ENCODE measurements at regions of chr11 and their contacts with region 1.

Region 1: DNA sequence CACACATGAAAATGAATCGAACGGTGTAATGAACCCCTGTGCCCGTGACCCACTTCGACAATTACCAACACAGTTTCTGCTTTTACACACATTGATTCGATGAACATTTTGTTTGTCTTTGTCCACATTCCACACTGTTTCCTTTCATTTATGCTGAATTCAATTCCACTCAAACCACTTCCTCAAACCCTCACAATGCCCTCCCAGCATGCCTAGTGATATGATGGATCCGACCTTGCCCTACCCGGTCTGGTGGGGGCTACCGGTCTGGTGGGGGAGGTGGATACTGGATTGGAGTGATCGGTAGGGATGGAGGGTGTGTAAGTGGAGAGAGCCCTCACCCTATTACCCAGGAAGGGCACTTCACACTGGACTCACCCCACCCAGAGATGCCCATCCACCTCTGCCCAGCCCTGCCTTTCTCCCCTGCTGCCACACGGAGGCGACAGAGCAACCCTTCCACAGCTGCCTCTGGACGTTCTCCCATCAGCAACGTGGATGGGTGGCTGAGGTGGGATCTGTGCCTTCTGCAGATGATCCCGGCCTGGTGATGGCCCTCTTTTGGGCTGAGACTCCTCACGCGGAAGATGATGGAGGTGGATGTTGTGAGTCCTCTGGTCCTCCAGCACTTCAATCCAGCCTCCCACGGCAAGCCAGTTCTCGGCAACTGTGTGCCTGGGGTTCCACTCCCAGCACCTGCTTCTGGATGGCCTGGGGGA is 33.0 kb upstream of the P2RY2 start:
- DNase-seq: peak in 1 of 2 experiments; percentile 84
- H3K4me3 ChIP-seq: no peak overlapping the region
- H3K27ac ChIP-seq: no peak overlapping the region
- H3K4me1 ChIP-seq: no peaks in the 10 kb centered on the region
- H3K27me3 ChIP-seq: no peaks in the 10 kb centered on the region
- CTCF ChIP-seq: peak; percentile 96 to 100 (median 96)
- EP300 ChIP-seq: no peak
- POLR2A ChIP-seq: no peak
- RAD21 ChIP-seq: peak; percentile 84 to 91

Region 2: DNA sequence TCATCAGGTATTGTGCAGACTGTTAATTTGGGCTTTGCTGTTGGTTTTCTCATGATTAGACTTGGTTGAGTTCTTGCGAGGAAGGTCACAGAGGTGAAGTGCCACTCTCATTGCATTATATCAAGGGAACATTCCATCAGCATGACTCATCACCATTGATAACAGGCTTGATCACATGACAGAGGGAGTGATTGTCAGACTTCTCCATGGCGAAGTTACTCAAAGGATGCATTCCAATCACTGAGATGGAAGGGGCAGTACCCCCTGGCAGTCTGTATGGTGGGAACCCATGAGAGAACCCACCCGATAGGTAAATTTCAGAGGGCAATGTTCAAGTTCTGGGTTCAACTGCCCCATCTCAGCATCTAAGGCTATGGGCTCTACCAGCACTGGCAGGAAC is 13.6 kb after region 1 on chr11:
- CTCF ChIA-PET with region 1: interaction called, 44 read pairs
- POLR2A ChIA-PET with region 1: no interaction called
- DNase-seq: no peak
- H3K4me3 ChIP-seq: no peak overlapping the region
- H3K27ac ChIP-seq: no peak overlapping the region
- H3K4me1 ChIP-seq: peaks cover 7 to 20% (median 15%) of the 10 kb centered on the region in 4 experiments
- H3K27me3 ChIP-seq: no peaks in the 10 kb centered on the region
- CTCF ChIP-seq: no peak
- EP300 ChIP-seq: no peak
- POLR2A ChIP-seq: no peak
- RAD21 ChIP-seq: no peak

Region 3: DNA sequence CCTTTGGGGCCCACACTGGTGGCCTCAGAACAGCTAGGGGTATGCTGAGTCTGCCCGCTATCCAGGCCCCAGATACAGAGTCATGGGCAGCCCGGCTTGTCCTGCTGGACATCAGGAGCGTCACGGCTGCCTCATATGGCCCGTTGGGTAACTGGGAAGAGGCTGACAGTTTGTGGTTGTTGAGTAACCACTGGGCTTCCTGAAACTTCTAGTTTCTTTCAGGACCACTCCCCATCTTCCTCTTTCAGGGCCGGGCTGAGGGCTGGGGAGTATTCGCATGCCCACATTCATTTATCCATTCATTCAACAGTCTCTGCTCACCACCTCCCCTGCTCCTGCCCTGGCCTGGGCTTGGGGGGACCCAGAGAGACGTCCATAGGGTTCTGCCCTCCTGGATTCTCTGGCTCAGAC is 19.6 kb after region 1 on chr11:
- CTCF ChIA-PET with region 1: interaction called, 15 read pairs
- POLR2A ChIA-PET with region 1: no interaction called
- DNase-seq: no peak
- H3K4me3 ChIP-seq: no peak overlapping the region
- H3K27ac ChIP-seq: no peak overlapping the region
- H3K4me1 ChIP-seq: peaks cover 7 to 16% (median 10%) of the 10 kb centered on the region in 4 experiments; a peak in 6 of 7 replicates
- H3K27me3 ChIP-seq: no peaks in the 10 kb centered on the region
- CTCF ChIP-seq: no peak
- EP300 ChIP-seq: no peak
- POLR2A ChIP-seq: no peak
- RAD21 ChIP-seq: no peak

Region 4: GRCh38 chr11:73218106-73218829 is 33.2 kb after region 1 on chr11 and contains the start of gene P2RY2:
- CTCF ChIA-PET with region 1: interaction called, 22 read pairs
- POLR2A ChIA-PET with region 1: interaction called, 3 read pairs
- DNase-seq: peak; percentile 15 to 91
- H3K4me3 ChIP-seq: peak within 1 kb of the TSS; percentile 58 to 69 (median 64)
- H3K27ac ChIP-seq: no peak within 1 kb of the TSS
- H3K4me1 ChIP-seq: peaks cover 0 to 5% (median 2%) of the 10 kb centered on the region in 4 experiments; a peak in 5 of 7 replicates
- H3K27me3 ChIP-seq: peaks cover 2 to 35% (median 31%) of the 10 kb centered on the region in 4 experiments
- CTCF ChIP-seq: peak; percentile 47 to 70 (median 64)
- EP300 ChIP-seq: no peak
- POLR2A ChIP-seq: no peak
- RAD21 ChIP-seq: peak; percentile 22 to 27; a peak in 2 of 4 replicates
- total RNA-seq, gene P2RY2: 1.0 and 1.2 TPM in 2 replicates

Region 5: GRCh38 chr11:73242251-73243079 is 57.4 kb after region 1 on chr11:
- CTCF ChIA-PET with region 1: interaction called, 451 read pairs
- POLR2A ChIA-PET with region 1: no interaction called
- DNase-seq: peak in 1 of 2 experiments; percentile 97
- H3K4me3 ChIP-seq: peak overlapping the region; percentile 14 to 58 (median 22); a peak in 5 of 8 replicates
- H3K27ac ChIP-seq: peak overlapping the region; percentile 13; the same call in 1 of the 2 replicates
- H3K4me1 ChIP-seq: peaks cover 0 to 8% (median 3%) of the 10 kb centered on the region in 4 experiments; a peak in 3 of 7 replicates
- H3K27me3 ChIP-seq: no peaks in the 10 kb centered on the region
- CTCF ChIP-seq: peak; percentile 92 to 96 (median 93)
- EP300 ChIP-seq: no peak
- POLR2A ChIP-seq: peak in 1 of 2 experiments; percentile 75; a peak in 1 of 3 replicates
- RAD21 ChIP-seq: peak; percentile 80 to 85

Region 6: DNA sequence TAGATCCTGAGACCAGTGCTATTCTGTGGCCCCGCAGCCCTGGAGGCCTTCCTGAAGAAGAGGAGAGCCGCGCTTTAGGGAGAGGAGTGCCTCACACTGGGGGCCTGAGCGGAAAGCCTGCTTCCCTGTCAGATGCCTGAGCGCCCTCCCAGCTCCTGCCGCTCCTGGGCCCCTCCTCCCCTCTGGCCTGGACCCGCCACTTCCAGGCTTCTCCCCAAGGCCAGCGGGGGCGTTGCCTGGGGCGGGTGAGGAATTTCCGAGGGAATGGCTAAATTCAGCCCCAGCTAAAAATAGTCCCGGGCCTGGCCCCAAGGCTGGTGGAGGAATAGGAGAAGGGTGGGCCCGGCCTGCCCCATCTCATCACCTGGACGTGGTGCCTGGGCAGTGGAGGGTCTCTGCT is 138.4 kb after region 1 on chr11:
- CTCF ChIA-PET with region 1: no interaction called
- POLR2A ChIA-PET with region 1: no interaction called
- DNase-seq: peak in 1 of 2 experiments; percentile 80
- H3K4me3 ChIP-seq: peak overlapping the region in 1 of 4 experiments; percentile 3; a peak in 3 of 8 replicates
- H3K27ac ChIP-seq: no peak overlapping the region; the same call in 1 of the 2 replicates
- H3K4me1 ChIP-seq: peaks cover 15 to 28% (median 20%) of the 10 kb centered on the region in 4 experiments
- H3K27me3 ChIP-seq: peaks cover 0 to 12% (median 4%) of the 10 kb centered on the region in 4 experiments; a peak in 3 of 7 replicates
- CTCF ChIP-seq: no peak
- EP300 ChIP-seq: no peak
- POLR2A ChIP-seq: no peak
- RAD21 ChIP-seq: 0 out of 4 replicates have a peak, but pooled peaks of 1 of the 2 experiments have one; percentile 9